ENCODE measurements at regions of chr5 and their contacts with region 1.

Region 1: GRCh38 chr5:137344723-137345322 is 154.3 kb downstream of the SPOCK1 start:
- DNase-seq: peak; percentile 39
- H3K4me3 ChIP-seq: no peak overlapping the region
- H3K27ac ChIP-seq: no peak overlapping the region
- H3K4me1 ChIP-seq: peaks cover 14% of the 10 kb centered on the region
- H3K27me3 ChIP-seq: no peaks in the 10 kb centered on the region
- CTCF ChIP-seq: peak; percentile 98 to 100

Region 2: GRCh38 chr5:137619191-137619870 is 274.5 kb after region 1 on chr5:
- CTCF ChIA-PET with region 1: interaction called, 4 read pairs
- dilution Hi-C with region 1: no loop called
- in situ Hi-C with region 1: loop called in 1 of 2 experiments (anchors 25 kb)
- intact Hi-C with region 1: no loop called
- DNase-seq: peak; percentile 49
- H3K4me3 ChIP-seq: no peak overlapping the region
- H3K27ac ChIP-seq: no peak overlapping the region
- H3K4me1 ChIP-seq: peaks cover 29% of the 10 kb centered on the region
- H3K27me3 ChIP-seq: no peaks in the 10 kb centered on the region
- CTCF ChIP-seq: no peak

Region 3: DNA sequence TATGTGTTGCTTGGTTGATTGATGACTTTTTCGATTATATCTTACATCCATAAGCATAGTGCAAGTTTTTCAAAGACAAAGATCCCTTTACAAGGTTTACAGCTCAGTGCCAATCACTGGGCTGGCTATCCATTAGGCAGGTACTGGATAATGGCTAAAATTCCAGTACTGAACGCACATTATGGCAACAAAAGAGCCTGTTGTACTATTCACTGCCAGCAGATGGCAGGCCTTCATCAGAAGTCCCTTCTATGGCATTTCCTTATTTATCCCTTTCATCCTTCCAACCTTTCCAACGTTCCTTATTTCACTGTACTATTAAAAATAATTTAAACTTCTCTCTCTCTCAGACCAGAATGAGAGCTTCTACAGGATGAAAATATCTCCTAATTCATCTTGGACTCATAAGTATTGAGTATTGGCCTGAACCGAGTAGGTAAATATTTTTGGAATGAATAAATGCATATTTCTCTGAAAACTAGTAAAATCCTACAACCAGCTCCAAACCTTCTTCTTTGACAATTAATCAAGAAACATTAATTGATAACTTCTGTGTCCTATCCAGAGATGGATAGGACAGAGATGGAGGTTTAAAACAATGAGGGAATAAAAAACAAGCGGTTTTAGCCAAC is 732.4 kb after region 1 on chr5:
- CTCF ChIA-PET with region 1: no interaction called
- dilution Hi-C with region 1: no loop called
- in situ Hi-C with region 1: no loop called
- intact Hi-C with region 1: no loop called
- DNase-seq: peak; percentile 46
- H3K4me3 ChIP-seq: no peak overlapping the region
- H3K27ac ChIP-seq: no peak overlapping the region
- H3K4me1 ChIP-seq: no peaks in the 10 kb centered on the region
- H3K27me3 ChIP-seq: no peaks in the 10 kb centered on the region
- CTCF ChIP-seq: peak; percentile 84 to 89

Measured in mammary epithelial cell (primary cell).